Caco-2 (cell line): ENCODE measurements at regions of chr22 and their contacts with region 1.

Region 1: GRCh38 chr22:22207845-22208564 is 36.6 kb upstream of the VPREB1 start:
- DNase-seq: peak; percentile 75 to 85
- H3K4me3 ChIP-seq: no peak overlapping the region
- H3K4me3 Mint-ChIP-seq: no peak overlapping the region
- H3K27ac Mint-ChIP-seq: no peak overlapping the region
- H3K4me1 ChIP-seq: no peaks in the 10 kb centered on the region
- H3K4me1 Mint-ChIP-seq: no peaks in the 10 kb centered on the region
- H3K27me3 ChIP-seq: no peaks in the 10 kb centered on the region
- H3K27me3 Mint-ChIP-seq: peaks cover 2% of the 10 kb centered on the region
- CTCF ChIP-seq: peak; percentile 85 to 93

Region 2: DNA sequence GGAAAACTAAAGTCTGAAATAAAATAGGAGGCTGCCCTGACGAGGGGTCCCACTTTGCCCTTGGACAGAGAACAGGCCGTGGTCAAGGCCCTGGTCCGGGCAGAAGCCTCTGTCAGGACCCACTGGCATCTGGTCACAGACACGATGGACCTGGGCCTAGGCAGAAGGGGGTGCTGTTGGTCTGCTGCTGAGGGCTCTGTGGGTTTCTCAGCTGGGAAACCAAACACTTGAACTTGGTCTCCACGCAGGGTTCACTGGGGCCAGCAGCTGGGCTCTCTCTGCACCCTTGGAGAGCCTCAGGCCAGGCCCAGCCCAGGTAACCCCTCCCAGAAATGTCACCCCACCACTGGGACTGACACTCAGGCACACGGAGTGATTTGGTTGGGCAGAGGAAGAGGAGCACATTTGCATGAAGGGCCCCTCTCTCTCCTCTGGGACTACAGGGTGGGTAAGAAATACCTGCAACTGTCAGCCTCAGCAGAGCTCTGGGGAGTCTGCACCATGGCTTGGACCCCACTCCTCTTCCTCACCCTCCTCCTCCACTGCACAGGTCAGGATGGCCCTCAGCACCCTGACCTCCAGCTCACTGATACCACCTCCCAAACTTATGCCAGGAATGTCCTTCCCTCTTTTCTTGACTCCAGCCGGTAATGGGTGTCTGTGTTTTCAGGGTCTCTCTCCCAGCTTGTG is 177.4 kb before region 1 on chr22:
- CTCF ChIA-PET with region 1: no interaction called
- POLR2A ChIA-PET with region 1: no interaction called
- intact Hi-C with region 1: loop called (anchors 1 kb)
- DNase-seq: peak; percentile 50 to 61
- H3K4me3 ChIP-seq: no peak overlapping the region
- H3K4me3 Mint-ChIP-seq: no peak overlapping the region
- H3K27ac Mint-ChIP-seq: no peak overlapping the region
- H3K4me1 ChIP-seq: no peaks in the 10 kb centered on the region
- H3K4me1 Mint-ChIP-seq: no peaks in the 10 kb centered on the region
- H3K27me3 ChIP-seq: no peaks in the 10 kb centered on the region
- H3K27me3 Mint-ChIP-seq: no peaks in the 10 kb centered on the region
- CTCF ChIP-seq: peak; percentile 50 to 78

Region 3: DNA sequence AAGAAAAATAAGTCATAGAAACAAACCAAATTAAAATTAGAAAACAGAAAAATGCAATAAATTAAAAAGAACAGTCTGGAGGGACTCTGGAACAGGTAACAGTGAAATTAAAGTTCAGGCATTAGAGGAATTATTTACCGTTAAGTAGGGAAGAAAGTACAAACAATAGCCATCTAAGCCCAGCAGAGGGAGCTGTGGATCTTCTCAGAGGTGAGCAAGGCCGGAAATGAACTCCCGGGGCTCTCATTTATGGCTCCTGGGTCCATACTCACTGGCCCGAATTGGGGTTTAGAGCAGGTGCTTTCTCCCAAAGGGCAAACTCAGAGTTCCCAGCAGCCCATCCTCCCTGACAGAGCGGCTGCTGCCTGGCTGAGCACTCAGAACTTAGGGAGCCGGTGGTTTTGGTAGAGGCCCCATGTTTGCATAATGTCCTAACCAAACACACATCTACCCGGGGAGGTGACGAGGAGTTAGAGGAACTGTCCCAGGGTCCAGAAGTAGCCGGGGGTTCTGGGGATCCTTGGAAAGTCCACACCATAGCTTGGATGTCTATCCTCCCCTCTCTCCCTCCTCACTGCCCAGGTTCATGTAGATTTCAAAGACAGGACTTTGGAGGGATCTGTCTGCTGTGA is 51.2 kb before region 1 on chr22:
- CTCF ChIA-PET with region 1: no interaction called
- POLR2A ChIA-PET with region 1: no interaction called
- intact Hi-C with region 1: loop called (anchors 1 kb)
- DNase-seq: peak; percentile 58 to 65
- H3K4me3 ChIP-seq: no peak overlapping the region
- H3K4me3 Mint-ChIP-seq: peak overlapping the region; percentile 14
- H3K27ac Mint-ChIP-seq: no peak overlapping the region
- H3K4me1 ChIP-seq: no peaks in the 10 kb centered on the region
- H3K4me1 Mint-ChIP-seq: no peaks in the 10 kb centered on the region
- H3K27me3 ChIP-seq: no peaks in the 10 kb centered on the region
- H3K27me3 Mint-ChIP-seq: peaks cover 16% of the 10 kb centered on the region
- CTCF ChIP-seq: peak; percentile 71 to 81

Region 4: DNA sequence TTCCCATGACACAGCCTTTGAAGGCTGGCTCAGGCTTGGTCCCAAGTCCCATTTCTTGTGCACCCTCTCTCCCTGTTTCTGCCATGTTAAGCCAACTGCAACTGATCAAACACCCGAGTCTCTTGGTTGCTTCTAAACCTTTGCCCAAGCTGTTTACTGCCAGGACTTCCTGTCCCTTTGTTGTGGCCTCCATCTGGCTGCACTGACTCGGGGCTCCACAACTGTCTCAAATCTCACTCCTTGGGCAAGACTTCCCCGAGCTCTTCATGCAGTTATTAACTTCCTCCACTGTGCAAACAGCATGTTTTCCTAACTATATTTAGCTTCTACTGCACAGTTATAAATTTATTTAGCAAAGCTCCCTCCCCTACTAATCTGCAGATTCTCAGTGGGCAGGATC is 40.9 kb after region 1 on chr22:
- CTCF ChIA-PET with region 1: no interaction called
- POLR2A ChIA-PET with region 1: no interaction called
- intact Hi-C with region 1: no loop called
- DNase-seq: no peak
- H3K4me3 ChIP-seq: no peak overlapping the region
- H3K4me3 Mint-ChIP-seq: no peak overlapping the region
- H3K27ac Mint-ChIP-seq: no peak overlapping the region
- H3K4me1 ChIP-seq: no peaks in the 10 kb centered on the region
- H3K4me1 Mint-ChIP-seq: no peaks in the 10 kb centered on the region
- H3K27me3 ChIP-seq: no peaks in the 10 kb centered on the region
- H3K27me3 Mint-ChIP-seq: no peaks in the 10 kb centered on the region
- CTCF ChIP-seq: no peak

Region 5: DNA sequence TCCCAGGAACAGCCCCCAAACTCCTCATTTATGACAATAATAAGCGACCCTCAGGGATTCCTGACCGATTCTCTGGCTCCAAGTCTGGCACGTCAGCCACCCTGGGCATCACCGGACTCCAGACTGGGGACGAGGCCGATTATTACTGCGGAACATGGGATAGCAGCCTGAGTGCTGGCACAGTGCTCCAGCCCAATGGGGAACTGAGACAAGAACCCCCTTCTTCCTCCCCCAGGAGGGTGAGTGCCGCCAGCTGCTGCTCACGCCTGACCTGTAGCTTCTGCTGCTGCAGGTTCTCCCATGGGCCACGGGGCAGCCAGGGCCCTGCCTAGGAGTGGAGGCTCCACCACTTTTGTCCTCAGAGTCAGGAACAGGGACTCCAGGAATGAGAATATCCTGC is 114.8 kb after region 1 on chr22:
- CTCF ChIA-PET with region 1: interaction called, 3 read pairs
- POLR2A ChIA-PET with region 1: no interaction called
- intact Hi-C with region 1: loop called (anchors 1 kb)
- DNase-seq: no peak
- H3K4me3 ChIP-seq: no peak overlapping the region
- H3K4me3 Mint-ChIP-seq: no peak overlapping the region
- H3K27ac Mint-ChIP-seq: no peak overlapping the region
- H3K4me1 ChIP-seq: no peaks in the 10 kb centered on the region
- H3K4me1 Mint-ChIP-seq: no peaks in the 10 kb centered on the region
- H3K27me3 ChIP-seq: no peaks in the 10 kb centered on the region; the same call in 1 of the 2 replicates
- H3K27me3 Mint-ChIP-seq: peaks cover 9% of the 10 kb centered on the region
- CTCF ChIP-seq: no peak

Region 6: GRCh38 chr22:22342697-22343580 is 134.9 kb after region 1 on chr22:
- CTCF ChIA-PET with region 1: interaction called, 7 read pairs
- POLR2A ChIA-PET with region 1: no interaction called
- intact Hi-C with region 1: loop called (anchors 1 kb)
- DNase-seq: peak; percentile 93 to 94
- H3K4me3 ChIP-seq: no peak overlapping the region
- H3K4me3 Mint-ChIP-seq: no peak overlapping the region
- H3K27ac Mint-ChIP-seq: no peak overlapping the region
- H3K4me1 ChIP-seq: peaks cover 13% of the 10 kb centered on the region; the same call in 1 of the 2 replicates
- H3K4me1 Mint-ChIP-seq: no peaks in the 10 kb centered on the region
- H3K27me3 ChIP-seq: no peaks in the 10 kb centered on the region
- H3K27me3 Mint-ChIP-seq: peaks cover 5% of the 10 kb centered on the region
- CTCF ChIP-seq: peak; percentile 88 to 90